Activated T-helper 1 cell treated with anti-CD3 and anti-CD28 coated beads, Interleukin-12 subunit alpha, Interleukin-12 subunit beta, Interleukin-2, Interleukin-4 antibody, amounts not matched to agents 30 ng/mL and 10 ng/mL and 1 ng/mL, durations not matched to agents 14 hours and 24 hours and 36 hours (primary cell): ENCODE measurements at regions of chr10 and their contacts with region 1.

Region 1: GRCh38 chr10:12448729-12449391 is 99.5 kb downstream of the CAMK1D start:
- DNase-seq: peak; percentile 81
- H3K4me3 Mint-ChIP-seq: peak overlapping the region; percentile 64
- H3K27ac Mint-ChIP-seq: peak overlapping the region; percentile 72
- H3K4me1 Mint-ChIP-seq: peaks cover 31% of the 10 kb centered on the region
- H3K27me3 Mint-ChIP-seq: peaks cover 16% of the 10 kb centered on the region

Region 2: DNA sequence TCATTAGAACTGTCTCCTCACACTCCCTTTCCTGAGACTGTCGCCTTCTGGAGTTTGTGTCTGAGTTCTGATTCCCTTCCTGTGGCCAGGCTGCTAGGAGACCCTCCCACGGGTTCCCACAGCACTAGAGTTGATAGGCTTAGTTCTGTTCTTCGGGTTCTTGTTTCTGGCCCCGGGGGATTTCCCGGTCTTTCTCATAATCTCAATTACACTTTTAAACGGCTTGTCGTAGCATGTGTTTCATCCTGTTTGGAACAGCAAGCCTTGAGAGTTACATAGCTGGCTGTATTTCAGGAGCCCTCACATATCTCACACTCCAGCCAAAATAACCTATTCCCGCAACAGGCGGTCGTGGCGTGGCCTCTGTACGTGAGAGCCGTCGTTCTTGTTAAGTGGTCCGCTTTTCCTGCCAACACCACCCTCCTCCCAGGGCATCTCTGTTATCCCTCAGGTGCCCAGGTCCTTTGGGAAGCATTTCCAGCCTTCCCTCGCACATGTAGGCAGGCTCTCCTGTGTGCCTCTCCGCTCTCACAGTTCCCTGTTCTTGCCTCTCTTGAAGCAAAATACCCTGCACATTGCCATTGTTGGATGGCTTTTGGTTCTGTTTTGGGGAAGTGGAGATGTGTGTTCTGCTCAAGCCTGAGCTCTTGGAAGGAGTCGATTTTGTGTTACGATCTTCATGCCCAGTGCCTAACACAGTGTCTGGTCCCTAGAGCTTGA is 206.9 kb before region 1 on chr10:
- intact Hi-C with region 1: loop called (anchors 1 kb)
- DNase-seq: no peak
- H3K4me3 Mint-ChIP-seq: peak overlapping the region; percentile 59
- H3K27ac Mint-ChIP-seq: peak overlapping the region; percentile 80
- H3K4me1 Mint-ChIP-seq: peaks cover 26% of the 10 kb centered on the region
- H3K27me3 Mint-ChIP-seq: no peaks in the 10 kb centered on the region

Region 3: GRCh38 chr10:12348870-12349628 is 99.8 kb before region 1 on chr10 and contains the start of gene CAMK1D:
- intact Hi-C with region 1: loop called (anchors 1 kb)
- DNase-seq: peak; percentile 79
- H3K4me3 Mint-ChIP-seq: peak within 1 kb of the TSS; percentile 90
- H3K27ac Mint-ChIP-seq: peak within 1 kb of the TSS; percentile 97
- H3K4me1 Mint-ChIP-seq: peaks cover 37% of the 10 kb centered on the region
- H3K27me3 Mint-ChIP-seq: peaks cover 60% of the 10 kb centered on the region
- total RNA-seq, gene CAMK1D: 6.8 and 7.4 TPM in 2 replicates

Region 4: DNA sequence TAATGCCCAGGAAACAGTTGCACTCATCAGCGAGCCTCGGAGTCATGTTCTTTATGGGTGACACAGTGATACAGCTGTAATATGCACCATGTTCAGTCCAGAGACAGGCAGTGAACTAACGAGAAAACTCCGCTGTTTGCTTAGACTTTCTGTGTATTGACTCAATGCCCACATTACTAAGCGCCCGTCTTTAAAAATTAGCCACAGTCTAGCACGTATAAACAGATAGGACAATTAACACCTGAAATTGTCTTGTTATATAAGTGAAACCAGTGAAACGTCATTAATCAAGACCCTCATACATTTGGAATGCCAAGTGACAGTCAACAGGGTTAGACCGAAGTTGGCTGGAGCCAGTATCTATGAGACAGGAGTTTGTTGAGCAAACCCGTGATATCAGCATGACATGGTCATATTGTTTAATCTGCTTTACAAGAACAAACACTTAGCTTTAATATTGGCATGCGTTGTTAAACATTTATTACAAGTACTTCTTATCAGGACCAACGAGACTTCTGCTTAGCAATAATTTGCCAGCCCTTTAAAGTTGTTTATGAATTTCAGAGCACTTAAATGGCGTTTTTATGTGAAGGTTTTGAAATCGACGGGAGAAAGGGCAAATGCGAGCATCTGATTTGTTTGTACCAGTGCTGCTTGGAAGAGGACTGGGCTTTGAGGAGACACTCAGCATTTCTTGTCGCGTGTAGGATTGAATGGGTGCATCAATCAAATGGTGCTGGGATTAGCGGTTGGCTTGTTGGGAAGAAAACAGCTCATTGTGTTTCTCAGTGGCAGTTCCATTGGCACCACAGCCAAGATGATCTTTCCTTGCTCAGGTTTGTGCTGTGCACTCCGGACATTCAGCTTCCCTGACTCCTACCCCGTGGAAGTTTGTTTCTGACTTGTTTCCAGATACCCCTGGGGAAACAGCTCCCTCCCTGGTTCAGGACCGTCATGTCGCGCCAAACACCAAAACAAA is 43.2 kb before region 1 on chr10:
- intact Hi-C with region 1: loop called (anchors 1 kb)
- DNase-seq: no peak
- H3K4me3 Mint-ChIP-seq: no peak overlapping the region
- H3K27ac Mint-ChIP-seq: peak overlapping the region; percentile 15
- H3K4me1 Mint-ChIP-seq: peaks cover 40% of the 10 kb centered on the region
- H3K27me3 Mint-ChIP-seq: peaks cover 18% of the 10 kb centered on the region

Region 5: GRCh38 chr10:12594448-12594944 is 145.6 kb after region 1 on chr10:
- intact Hi-C with region 1: loop called (anchors 2 kb)
- DNase-seq: peak; percentile 64
- H3K4me3 Mint-ChIP-seq: peak overlapping the region; percentile 45
- H3K27ac Mint-ChIP-seq: peak overlapping the region; percentile 90
- H3K4me1 Mint-ChIP-seq: peaks cover 95% of the 10 kb centered on the region
- H3K27me3 Mint-ChIP-seq: no peaks in the 10 kb centered on the region

Region 6: GRCh38 chr10:12617191-12618175 is 168.6 kb after region 1 on chr10:
- intact Hi-C with region 1: no loop called
- DNase-seq: no peak
- H3K4me3 Mint-ChIP-seq: no peak overlapping the region
- H3K27ac Mint-ChIP-seq: no peak overlapping the region
- H3K4me1 Mint-ChIP-seq: no peaks in the 10 kb centered on the region
- H3K27me3 Mint-ChIP-seq: peaks cover 3% of the 10 kb centered on the region

Region 7: DNA sequence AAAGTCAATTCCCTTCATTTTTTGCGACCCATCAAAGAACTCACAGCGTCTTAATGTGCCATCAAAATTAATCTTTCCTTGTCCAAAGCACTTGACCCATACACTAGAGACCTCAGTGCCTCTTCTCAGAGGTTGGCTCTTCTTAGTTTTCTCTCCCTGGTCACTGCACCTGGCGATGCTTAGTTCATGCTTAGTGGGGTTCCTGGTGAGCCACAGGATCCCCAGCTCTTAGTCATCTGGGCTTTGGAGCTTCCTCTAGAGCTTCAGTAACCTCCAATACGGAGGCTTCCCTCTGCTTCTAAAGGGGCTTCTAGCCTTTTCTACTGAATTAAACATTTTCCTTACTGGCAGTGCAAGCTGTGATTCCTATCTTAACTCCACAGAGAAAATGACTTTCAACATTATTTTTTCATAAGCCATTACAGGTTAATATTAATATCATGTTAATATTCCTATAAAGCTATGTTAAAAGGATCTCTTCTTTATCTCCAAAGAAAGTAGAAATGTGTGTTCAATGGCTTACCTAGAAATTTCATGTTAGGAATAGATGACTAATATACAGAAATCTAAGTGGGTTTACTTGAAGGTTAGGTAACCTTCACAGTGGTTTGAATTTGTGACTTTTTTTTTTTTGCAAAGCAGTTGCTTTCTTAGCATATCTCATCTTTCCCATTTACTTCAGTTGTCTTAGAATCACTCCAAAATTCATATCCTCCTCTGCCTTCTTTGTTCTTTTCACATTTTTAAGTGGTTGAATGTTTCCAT is 195.7 kb after region 1 on chr10:
- intact Hi-C with region 1: loop called (anchors 2 kb)
- DNase-seq: no peak
- H3K4me3 Mint-ChIP-seq: peak overlapping the region; percentile 38
- H3K27ac Mint-ChIP-seq: peak overlapping the region; percentile 85
- H3K4me1 Mint-ChIP-seq: peaks cover 27% of the 10 kb centered on the region
- H3K27me3 Mint-ChIP-seq: peaks cover 2% of the 10 kb centered on the region

Region 8: DNA sequence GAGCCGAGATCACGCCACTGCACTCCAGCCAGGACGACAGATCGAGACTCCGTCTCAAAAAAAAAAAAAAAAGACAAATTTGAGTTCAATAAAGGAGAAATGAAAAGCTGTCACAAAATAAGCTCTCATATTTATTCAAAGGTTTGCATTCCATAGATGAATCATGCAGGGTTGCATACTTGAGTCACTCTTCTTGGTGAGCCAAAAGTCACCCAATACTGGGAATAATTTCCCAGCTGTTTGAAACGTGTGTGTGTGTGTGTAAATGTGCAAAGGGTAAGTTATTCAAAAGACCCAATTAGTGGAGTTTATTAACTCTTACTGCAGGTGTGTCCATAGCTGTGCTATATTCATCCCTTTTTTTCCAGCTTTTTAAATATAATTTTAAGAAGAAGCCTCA is 255.0 kb after region 1 on chr10:
- intact Hi-C with region 1: loop called (anchors 1 kb)
- DNase-seq: no peak
- H3K4me3 Mint-ChIP-seq: no peak overlapping the region
- H3K27ac Mint-ChIP-seq: peak overlapping the region; percentile 36
- H3K4me1 Mint-ChIP-seq: peaks cover 72% of the 10 kb centered on the region
- H3K27me3 Mint-ChIP-seq: no peaks in the 10 kb centered on the region